ENCODE measurements at regions of chr12 and their contacts with region 1.

Region 1: GRCh38 chr12:25130741-25131188 is 64.2 kb downstream of the DNAI7 start:
- DNase-seq: no peak
- H3K4me3 Mint-ChIP-seq: no peak overlapping the region
- H3K27ac Mint-ChIP-seq: no peak overlapping the region
- H3K4me1 Mint-ChIP-seq: no peaks in the 10 kb centered on the region
- H3K27me3 Mint-ChIP-seq: no peaks in the 10 kb centered on the region

Region 2: DNA sequence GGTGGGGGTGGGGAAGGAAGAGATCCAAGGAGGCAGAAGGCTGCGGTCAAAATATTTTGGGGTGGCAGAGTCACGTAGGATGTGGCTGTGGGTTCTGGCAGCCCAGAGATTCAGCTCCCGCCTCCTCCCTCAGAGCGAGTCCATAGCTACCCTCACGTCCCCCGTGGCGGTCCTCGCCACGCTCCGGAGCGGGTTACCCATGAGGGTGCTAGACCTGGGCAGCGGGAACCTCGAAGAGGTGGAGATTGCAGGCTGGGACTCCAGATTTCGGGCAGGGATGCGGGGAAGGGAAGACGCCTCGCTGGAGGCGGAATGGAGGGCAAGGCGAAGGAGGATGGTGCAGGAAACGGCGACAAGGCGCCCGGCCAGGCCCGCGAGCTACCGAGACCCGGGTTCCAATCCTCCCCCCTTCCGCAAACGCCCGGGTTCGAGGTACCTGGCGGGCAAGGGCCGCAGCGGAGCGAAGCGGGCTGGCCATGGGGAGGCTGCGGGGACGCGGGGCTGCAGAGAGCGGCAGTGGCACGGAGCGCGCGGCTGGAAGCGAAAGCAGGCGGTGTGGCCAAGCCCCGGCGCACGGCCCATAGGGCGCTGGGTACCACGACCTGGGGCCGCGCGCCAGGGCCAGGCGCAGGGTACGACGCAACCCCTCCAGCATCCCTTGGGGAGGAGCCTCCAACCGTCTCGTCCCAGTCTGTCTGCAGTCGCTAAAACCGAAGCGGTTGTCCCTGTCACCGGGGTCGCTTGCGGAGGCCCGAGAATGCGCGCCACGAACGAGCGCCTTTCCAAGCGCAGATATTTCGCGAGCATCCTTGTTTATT is 228.0 kb before region 1 on chr12:
- CTCF ChIA-PET with region 1: no interaction called
- POLR2A ChIA-PET with region 1: no interaction called
- DNase-seq: peak; percentile 50
- H3K4me3 Mint-ChIP-seq: peak overlapping the region; percentile 90
- H3K27ac Mint-ChIP-seq: peak overlapping the region; percentile 91
- H3K4me1 Mint-ChIP-seq: peaks cover 34% of the 10 kb centered on the region
- H3K27me3 Mint-ChIP-seq: peaks cover 14% of the 10 kb centered on the region

Region 3: GRCh38 chr12:24991209-24992049 is 139.3 kb before region 1 on chr12:
- CTCF ChIA-PET with region 1: interaction called, 11 read pairs
- POLR2A ChIA-PET with region 1: no interaction called
- DNase-seq: peak; percentile 41
- H3K4me3 Mint-ChIP-seq: no peak overlapping the region
- H3K27ac Mint-ChIP-seq: no peak overlapping the region
- H3K4me1 Mint-ChIP-seq: no peaks in the 10 kb centered on the region
- H3K27me3 Mint-ChIP-seq: peaks cover 1% of the 10 kb centered on the region

Measured in activated CD4-positive, alpha-beta T cell treated with anti-CD3 and anti-CD28 coated beads, Interleukin-2, amount 10 ng/mL, durations not matched to agents 7 days and 5 days (primary cell).